Panc1 (cell line): ENCODE measurements at regions of chr9 and their contacts with region 1.

Region 1: DNA sequence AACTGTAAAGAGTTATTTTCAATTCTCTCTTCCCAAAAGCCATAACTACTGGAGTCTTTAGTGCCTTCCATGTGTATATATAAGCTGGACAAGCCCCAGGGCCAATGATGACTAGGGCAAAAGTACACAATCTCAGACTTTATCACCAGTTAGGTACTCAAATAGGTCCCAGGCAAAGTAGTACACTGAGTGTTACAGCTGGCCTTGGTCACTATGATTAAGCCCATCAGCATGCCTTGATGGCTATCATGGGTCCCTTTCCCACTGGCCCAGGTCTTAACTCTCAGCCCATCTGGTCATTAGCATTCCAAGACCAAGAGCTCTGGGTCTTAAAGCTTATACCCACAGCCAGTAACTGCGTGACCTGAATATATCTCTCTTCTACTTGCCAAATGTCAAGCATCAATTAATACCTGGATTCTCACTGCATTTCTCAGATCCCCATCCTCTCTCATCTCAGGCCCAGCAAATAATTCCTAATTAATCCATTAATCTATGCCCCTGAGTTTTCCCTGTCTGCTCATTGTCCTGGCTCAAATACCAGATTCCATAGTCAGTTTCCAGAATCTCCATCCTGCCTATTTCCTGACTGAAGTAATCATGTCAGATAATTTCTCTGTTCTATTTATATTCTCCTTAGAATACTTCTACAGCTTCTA is 62.3 kb downstream of the NR6A1 start:
- DNase-seq: peak; percentile 15
- ATAC-seq: peak; percentile 81
- H3K4me3 ChIP-seq: no peak overlapping the region
- H3K27ac ChIP-seq: peak overlapping the region; percentile 59
- H3K4me1 ChIP-seq: peaks cover 24% of the 10 kb centered on the region
- H3K27me3 ChIP-seq: no peaks in the 10 kb centered on the region
- CTCF ChIP-seq: no peak

Region 2: DNA sequence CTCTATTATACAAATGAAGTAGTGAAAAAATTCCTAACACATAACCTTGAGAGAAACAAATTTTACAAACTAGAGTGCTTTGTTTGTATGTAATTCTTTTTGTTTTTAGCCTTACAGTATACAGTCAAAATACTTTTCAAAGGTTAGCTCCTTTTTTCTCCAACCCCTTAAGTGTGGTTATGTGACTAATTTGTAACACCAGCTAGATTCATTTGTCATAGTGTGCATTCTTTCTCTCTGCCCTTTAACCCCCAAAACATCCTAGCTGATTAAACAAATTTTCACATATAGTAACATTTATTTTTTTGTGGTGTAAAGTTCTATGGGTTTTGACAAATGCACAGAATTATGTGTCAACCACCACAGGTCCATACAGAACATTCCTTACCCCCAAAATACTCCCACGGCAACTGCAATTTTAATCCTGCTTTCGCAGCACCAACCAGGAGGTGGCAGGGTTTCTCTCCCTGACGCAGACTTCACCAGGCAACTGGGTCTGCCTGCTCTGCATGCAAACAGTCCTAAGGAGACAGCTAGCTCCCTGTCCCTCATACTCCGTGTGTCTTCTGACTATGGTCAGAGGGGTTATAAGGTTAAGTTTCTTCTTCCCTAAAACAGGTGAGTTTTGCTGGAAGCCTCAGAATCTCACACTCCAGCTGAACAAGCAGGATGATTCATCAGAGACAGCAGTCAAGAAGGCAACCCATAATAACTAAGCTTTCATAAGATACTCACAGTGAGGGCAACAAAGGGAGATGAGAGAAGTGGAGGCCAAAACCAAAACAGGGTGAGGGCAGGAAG is 157.1 kb before region 1 on chr9:
- CTCF ChIA-PET with region 1: interaction called, 6 read pairs
- POLR2A ChIA-PET with region 1: no interaction called
- in situ Hi-C with region 1: no loop called
- intact Hi-C with region 1: loop called (anchors 2 kb)
- DNase-seq: peak; percentile 25
- ATAC-seq: peak; percentile 97
- H3K4me3 ChIP-seq: no peak overlapping the region
- H3K27ac ChIP-seq: no peak overlapping the region
- H3K4me1 ChIP-seq: peaks cover 4% of the 10 kb centered on the region; the same call in 1 of the 2 replicates
- H3K27me3 ChIP-seq: no peaks in the 10 kb centered on the region
- CTCF ChIP-seq: peak; percentile 81